ENCODE measurements at regions of chr1 and their contacts with region 1.

Region 1: GRCh38 chr1:194860248-194861201 is 1674.1 kb upstream of the B3GALT2 start:
- DNase-seq: no peak
- H3K4me3 ChIP-seq: no peak overlapping the region
- H3K27ac ChIP-seq: no peak overlapping the region
- H3K4me1 ChIP-seq: no peaks in the 10 kb centered on the region
- H3K27me3 ChIP-seq: no peaks in the 10 kb centered on the region
- CTCF ChIP-seq: no peak
- POLR2A ChIP-seq: no peak

Region 2: DNA sequence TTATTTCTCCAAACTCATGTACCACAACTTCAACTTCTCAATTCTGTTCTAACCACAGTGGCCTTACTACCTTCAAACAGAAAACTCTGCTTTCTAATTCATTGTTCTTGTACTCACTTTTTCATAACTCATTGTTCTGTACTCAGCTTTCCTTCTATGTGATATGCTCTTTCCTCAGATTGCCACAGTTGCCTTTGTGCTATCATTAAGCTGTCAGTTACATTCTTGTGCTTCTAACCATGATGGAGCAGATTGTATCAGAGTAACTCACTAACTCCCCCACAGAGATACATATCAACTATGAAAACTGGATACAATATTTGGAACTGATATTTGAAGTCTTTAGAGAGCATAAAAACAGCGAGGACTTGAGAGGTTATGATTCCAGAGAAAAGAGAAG is 534.0 kb after region 1 on chr1:
- intact Hi-C with region 1: loop called (anchors 5 kb)
- DNase-seq: no peak
- H3K4me3 ChIP-seq: no peak overlapping the region
- H3K27ac ChIP-seq: no peak overlapping the region
- H3K4me1 ChIP-seq: no peaks in the 10 kb centered on the region
- H3K27me3 ChIP-seq: no peaks in the 10 kb centered on the region
- CTCF ChIP-seq: no peak
- POLR2A ChIP-seq: no peak

Measured in breast epithelium (tissue), 4 donors.